ENCODE measurements at regions of chrX and their contacts with region 1.

Region 1: GRCh38 chrX:107716816-107717700 is 58.5 kb downstream of the TSC22D3 start:
- DNase-seq: peak in 1 of 2 donors; percentile 95
- H3K4me3 ChIP-seq: peak overlapping the region; percentile 61 to 78
- H3K27ac ChIP-seq: peak overlapping the region; percentile 98
- H3K4me1 ChIP-seq: peaks cover 25% of the 10 kb centered on the region
- H3K27me3 ChIP-seq: no peaks in the 10 kb centered on the region
- CTCF ChIP-seq: no peak
- POLR2A ChIP-seq: peak; percentile 26 to 98

Region 2: GRCh38 chrX:107672955-107673378 is 44.1 kb before region 1 on chrX:
- intact Hi-C with region 1: loop called (anchors 2 kb)
- DNase-seq: no peak
- H3K4me3 ChIP-seq: no peak overlapping the region
- H3K27ac ChIP-seq: peak overlapping the region; percentile 88
- H3K4me1 ChIP-seq: peaks cover 23% of the 10 kb centered on the region
- H3K27me3 ChIP-seq: no peaks in the 10 kb centered on the region
- CTCF ChIP-seq: peak in 1 of 3 experiments; percentile 74
- POLR2A ChIP-seq: peak in 1 of 2 donors; percentile 25

Region 3: GRCh38 chrX:107776649-107777535 is 59.8 kb after region 1 on chrX:
- intact Hi-C with region 1: loop called (anchors 1 kb)
- DNase-seq: no peak
- H3K4me3 ChIP-seq: peak overlapping the region; percentile 42 to 55
- H3K27ac ChIP-seq: peak overlapping the region; percentile 84
- H3K4me1 ChIP-seq: peaks cover 10% of the 10 kb centered on the region
- H3K27me3 ChIP-seq: no peaks in the 10 kb centered on the region
- CTCF ChIP-seq: peak; percentile 56 to 90 (median 59)
- POLR2A ChIP-seq: no peak